Activated B cell treated with CpG ODN at 0.5 μM for 24 hours (primary cell): ENCODE measurements at regions of chr19 and their contacts with region 1.

Region 1: GRCh38 chr19:16371540-16371986 is 46.9 kb downstream of the KLF2 start:
- DNase-seq: peak; percentile 77
- ATAC-seq: peak; percentile 78
- H3K4me3 Mint-ChIP-seq: peak overlapping the region; percentile 78
- H3K27ac Mint-ChIP-seq: no peak overlapping the region
- H3K4me1 Mint-ChIP-seq: peaks cover 33% of the 10 kb centered on the region
- H3K27me3 Mint-ChIP-seq: no peaks in the 10 kb centered on the region
- CTCF ChIP-seq: no peak

Region 2: DNA sequence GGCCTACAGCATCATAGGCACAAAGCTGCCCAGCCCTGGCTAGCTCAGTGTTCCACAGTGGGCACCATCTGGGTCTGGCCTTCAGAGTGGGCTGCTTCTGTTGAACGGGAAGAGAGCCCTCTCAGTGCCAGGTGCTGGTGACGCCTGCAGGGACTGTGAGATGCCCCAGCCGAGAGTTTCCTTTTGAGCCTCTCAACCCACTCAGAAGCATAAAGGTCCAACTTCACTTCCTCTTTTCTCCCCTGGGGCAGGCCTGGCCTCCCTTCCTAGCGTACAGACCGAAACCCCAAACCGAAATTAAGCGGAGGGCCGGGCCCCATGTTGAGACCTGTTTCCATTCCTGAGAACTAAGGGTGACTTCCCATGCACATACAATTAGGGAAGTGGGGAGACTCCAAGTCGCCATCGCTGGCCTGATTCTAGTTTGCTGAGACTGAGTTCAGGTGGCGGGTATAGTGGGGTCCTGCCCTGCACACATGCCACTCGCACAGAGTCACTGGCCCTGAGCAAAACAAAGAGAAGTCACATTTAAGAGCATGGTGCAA is 253.0 kb before region 1 on chr19:
- CTCF ChIA-PET with region 1: no interaction called
- POLR2A ChIA-PET with region 1: interaction called, 11 read pairs
- intact Hi-C with region 1: no loop called
- DNase-seq: peak; percentile 76
- ATAC-seq: peak; percentile 87
- H3K4me3 Mint-ChIP-seq: peak overlapping the region; percentile 73
- H3K27ac Mint-ChIP-seq: peak overlapping the region; percentile 98
- H3K4me1 Mint-ChIP-seq: peaks cover 80% of the 10 kb centered on the region
- H3K27me3 Mint-ChIP-seq: no peaks in the 10 kb centered on the region
- CTCF ChIP-seq: no peak

Region 3: DNA sequence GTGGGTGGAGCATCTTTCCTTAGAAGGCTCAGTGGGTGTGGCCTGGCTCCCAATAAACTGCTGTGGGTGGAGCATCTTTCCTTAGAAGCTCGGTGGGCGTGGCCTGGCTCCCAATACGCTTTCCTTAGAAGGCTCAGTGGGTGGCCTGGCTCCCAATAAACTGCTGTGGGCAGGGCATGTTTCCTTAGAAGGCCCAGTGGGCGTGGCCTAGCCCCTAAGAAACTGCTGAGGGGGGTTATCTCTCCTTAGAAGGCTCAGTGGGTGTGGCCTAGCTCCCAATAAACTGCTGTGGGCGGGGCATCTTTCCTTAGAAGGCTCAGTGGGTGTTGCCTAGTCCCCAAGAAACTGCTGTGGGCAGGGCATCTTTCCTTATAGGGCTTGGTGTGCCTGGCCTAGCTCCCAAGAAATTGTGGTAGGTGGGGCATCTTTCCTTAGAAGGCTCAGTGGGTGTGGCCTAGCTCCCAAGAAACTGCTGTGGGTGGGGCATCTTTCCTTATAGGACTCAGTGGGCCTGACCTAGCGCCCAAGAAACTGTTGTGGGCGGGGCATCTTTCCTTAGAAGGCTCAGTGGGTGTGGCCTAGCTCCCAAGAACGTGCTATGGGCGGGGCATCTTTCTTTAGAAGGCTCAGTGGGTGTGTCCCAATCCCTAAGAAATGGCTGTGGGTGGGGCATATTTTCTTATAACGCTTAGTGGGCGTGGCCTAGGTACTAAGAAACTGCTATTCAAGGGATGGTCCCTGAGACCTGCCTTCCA is 217.8 kb before region 1 on chr19:
- CTCF ChIA-PET with region 1: no interaction called
- POLR2A ChIA-PET with region 1: no interaction called
- intact Hi-C with region 1: no loop called
- DNase-seq: no peak
- ATAC-seq: no peak
- H3K4me3 Mint-ChIP-seq: no peak overlapping the region
- H3K27ac Mint-ChIP-seq: peak overlapping the region; percentile 30
- H3K4me1 Mint-ChIP-seq: peaks cover 59% of the 10 kb centered on the region
- H3K27me3 Mint-ChIP-seq: no peaks in the 10 kb centered on the region
- CTCF ChIP-seq: no peak

Region 4: DNA sequence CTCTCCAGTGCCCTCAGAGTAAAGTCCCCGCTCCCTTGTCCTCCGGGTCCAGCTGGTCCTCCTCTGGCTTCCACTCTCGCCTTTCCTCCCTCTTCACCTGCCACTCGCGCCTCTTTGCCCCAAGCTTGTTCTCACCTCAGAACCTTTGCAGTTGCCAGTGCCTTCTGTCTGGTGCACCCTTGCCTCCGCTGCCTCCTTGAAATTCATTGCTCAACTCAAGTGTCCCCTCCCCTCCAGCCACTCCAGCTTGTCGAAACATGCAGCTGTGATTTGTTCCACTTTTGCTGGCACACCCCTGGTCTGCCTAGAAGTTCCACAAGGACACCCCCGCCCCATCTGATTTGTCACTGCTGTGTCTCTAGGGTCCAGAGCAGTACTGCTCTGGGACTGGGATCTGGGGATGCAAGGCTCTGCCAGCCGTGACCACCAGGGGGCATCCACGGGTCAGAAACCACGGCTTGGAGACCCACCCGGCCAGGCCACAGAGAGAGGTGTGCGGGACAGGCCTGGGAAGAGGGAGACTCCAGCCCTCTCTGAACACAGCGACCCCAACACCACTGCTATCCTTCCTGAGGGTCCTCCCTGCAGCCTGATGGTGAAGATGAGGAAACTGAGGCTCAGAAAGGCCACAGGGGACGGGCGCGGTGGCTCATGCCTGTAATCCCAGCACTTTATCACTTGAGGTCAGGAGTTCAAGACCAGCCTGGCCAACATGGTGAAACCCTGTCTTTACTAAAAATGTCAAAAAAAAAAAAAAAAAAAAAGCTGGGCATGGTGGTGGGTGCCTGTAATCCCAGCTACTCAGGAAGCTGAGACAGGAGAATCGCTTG is 124.0 kb before region 1 on chr19:
- CTCF ChIA-PET with region 1: interaction called, 9 read pairs
- POLR2A ChIA-PET with region 1: interaction called, 45 read pairs
- intact Hi-C with region 1: no loop called
- DNase-seq: peak; percentile 85
- ATAC-seq: peak; percentile 88
- H3K4me3 Mint-ChIP-seq: peak overlapping the region; percentile 17
- H3K27ac Mint-ChIP-seq: peak overlapping the region; percentile 32
- H3K4me1 Mint-ChIP-seq: peaks cover 41% of the 10 kb centered on the region
- H3K27me3 Mint-ChIP-seq: no peaks in the 10 kb centered on the region
- CTCF ChIP-seq: peak; percentile 33

Region 5: GRCh38 chr19:16301999-16302694 is 69.4 kb before region 1 on chr19:
- CTCF ChIA-PET with region 1: no interaction called
- POLR2A ChIA-PET with region 1: interaction called, 4 read pairs
- intact Hi-C with region 1: loop called (anchors 1 kb)
- DNase-seq: peak; percentile 43
- ATAC-seq: peak; percentile 81
- H3K4me3 Mint-ChIP-seq: peak overlapping the region; percentile 50
- H3K27ac Mint-ChIP-seq: peak overlapping the region; percentile 88
- H3K4me1 Mint-ChIP-seq: peaks cover 22% of the 10 kb centered on the region
- H3K27me3 Mint-ChIP-seq: no peaks in the 10 kb centered on the region
- CTCF ChIP-seq: no peak

Region 6: DNA sequence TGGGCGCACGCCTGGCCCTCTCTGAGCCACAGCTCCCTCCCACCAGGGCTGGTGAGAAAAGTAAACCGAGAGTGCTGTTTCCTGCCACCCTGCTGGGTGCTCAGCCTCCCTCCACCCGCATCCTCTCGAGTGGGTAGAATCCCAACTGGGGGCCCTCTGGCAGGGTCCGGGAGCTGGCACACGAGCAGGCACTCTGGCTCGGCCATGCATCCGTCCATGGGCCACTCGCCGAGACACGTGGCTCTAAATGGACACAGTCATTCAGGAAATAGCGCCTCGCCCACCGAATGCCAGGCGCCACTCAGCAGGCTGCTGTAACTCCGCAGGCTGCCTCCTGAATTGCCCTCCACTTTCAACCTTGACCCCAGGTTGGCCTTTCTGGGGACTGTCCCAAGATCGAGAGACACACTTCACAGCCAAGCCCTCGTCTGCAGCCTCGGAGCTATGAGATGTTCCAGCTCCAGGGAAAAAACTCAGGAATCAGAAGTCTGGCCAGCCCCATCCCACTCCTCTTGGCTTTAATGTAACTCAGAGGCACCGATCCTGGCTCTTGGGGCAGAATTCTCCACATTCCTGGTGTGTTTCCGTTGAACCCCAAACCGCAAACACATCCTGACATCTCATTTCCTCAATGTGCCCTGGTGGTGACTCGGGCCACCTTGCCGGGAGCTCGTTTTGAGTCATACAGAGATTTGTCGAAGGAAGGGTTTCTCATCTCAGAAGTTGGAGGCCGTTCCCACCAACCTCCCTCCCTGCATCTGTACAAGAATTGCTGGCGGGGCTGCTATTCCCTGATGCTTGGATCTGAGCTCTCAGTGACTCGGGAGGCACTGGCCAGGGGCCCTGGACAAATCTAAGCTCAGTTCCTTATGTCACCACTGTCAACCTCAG is 32.8 kb before region 1 on chr19:
- CTCF ChIA-PET with region 1: interaction called, 10 read pairs
- POLR2A ChIA-PET with region 1: interaction called, 828 read pairs
- intact Hi-C with region 1: loop called (anchors 1 kb)
- DNase-seq: no peak
- ATAC-seq: peak; percentile 19
- H3K4me3 Mint-ChIP-seq: peak overlapping the region; percentile 76
- H3K27ac Mint-ChIP-seq: peak overlapping the region; percentile 75
- H3K4me1 Mint-ChIP-seq: peaks cover 64% of the 10 kb centered on the region
- H3K27me3 Mint-ChIP-seq: no peaks in the 10 kb centered on the region
- CTCF ChIP-seq: no peak

Region 7: GRCh38 chr19:16382775-16383543 is 11.4 kb after region 1 on chr19:
- CTCF ChIA-PET with region 1: interaction called, 28 read pairs
- POLR2A ChIA-PET with region 1: interaction called, 194 read pairs
- intact Hi-C with region 1: loop called (anchors 1 kb)
- DNase-seq: peak; percentile 63
- ATAC-seq: peak; percentile 59
- H3K4me3 Mint-ChIP-seq: peak overlapping the region; percentile 57
- H3K27ac Mint-ChIP-seq: peak overlapping the region; percentile 94
- H3K4me1 Mint-ChIP-seq: peaks cover 82% of the 10 kb centered on the region
- H3K27me3 Mint-ChIP-seq: no peaks in the 10 kb centered on the region
- CTCF ChIP-seq: no peak

Region 8: DNA sequence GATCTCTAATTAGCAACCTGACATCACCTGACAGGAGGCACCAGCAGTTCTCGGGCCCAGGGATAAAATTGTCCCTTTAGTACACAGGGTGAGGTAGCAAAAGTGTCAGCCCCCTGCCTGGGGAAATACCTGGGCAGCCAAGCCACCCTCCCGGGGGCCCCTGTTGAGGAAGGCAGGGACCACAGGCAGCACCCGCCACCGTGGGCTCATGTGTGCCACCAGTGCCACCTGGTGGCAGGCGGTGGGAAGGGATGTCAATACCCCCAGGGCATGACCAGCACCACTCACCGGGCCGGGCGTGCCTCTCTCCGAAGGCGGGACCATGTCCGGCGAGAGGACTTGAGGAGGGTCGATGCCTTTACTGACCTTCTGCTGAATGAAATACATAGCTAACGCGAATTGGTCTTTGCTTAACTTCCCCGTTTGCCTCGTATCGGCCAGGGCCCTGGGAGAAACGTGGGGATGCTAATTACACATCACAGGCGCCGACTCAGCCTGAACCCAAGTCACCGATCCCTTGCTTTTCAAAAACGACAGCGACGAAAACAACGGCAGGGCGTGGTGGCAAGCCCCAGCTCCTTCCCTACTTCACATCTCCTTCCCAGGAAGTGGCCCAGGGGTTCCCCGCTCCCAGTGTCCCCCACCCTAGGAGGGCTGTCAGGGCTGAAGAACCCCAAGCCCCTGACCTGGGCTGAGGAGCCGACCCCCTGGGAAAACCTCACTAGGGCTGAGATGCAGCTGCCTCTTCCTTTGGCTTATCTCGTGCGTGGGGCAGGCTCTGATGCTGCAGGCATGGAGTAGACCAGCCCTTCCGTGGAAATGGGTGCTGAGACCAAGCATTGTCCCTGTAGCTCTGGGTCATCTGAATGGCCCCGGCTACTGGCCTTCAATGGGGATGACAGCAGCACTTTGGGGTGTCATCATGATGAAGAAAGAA is 46.4 kb after region 1 on chr19:
- CTCF ChIA-PET with region 1: interaction called, 9 read pairs
- POLR2A ChIA-PET with region 1: interaction called, 22 read pairs
- intact Hi-C with region 1: no loop called
- DNase-seq: peak; percentile 80
- ATAC-seq: peak; percentile 92
- H3K4me3 Mint-ChIP-seq: peak overlapping the region; percentile 61
- H3K27ac Mint-ChIP-seq: peak overlapping the region; percentile 83
- H3K4me1 Mint-ChIP-seq: peaks cover 37% of the 10 kb centered on the region
- H3K27me3 Mint-ChIP-seq: no peaks in the 10 kb centered on the region
- CTCF ChIP-seq: peak; percentile 87

Region 9: DNA sequence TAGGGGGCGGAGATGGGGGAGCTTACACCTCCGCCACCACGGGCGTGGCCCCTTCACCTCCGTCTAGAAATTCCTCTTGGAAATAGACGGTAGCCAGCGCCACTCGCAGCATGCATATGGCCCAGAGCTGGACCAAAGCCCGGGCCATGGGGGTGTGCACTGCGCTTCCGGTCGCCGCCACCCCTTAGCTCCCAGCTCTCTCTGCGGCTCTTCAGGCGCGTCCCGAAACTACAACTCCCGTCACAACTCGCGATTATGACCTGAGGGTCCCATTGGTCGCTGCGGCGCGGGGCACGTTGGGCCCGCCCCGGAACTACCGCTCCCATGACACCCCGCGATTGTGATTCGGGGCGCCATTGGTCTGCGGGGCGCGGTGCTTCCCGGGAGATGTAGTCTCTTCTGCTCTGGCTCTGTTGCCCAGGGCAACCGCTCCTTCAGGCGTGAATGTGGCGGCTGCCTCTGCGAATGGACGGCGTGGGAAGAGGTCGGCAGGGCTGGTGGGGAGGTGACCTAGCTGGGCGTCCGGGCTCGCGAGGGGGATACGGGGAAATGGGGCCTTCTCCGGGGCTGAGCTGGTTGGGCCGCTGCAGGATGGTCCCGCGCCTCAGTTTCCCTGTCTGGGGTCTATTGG is 124.5 kb after region 1 on chr19 and contains the starts of genes C19orf44 and CALR3:
- CTCF ChIA-PET with region 1: no interaction called
- POLR2A ChIA-PET with region 1: no interaction called
- intact Hi-C with region 1: no loop called
- DNase-seq: peak; percentile 94
- ATAC-seq: peak; percentile 97
- H3K4me3 Mint-ChIP-seq: peak within 1 kb of the TSS; percentile 98
- H3K27ac Mint-ChIP-seq: peak within 1 kb of the TSS; percentile 88
- H3K4me1 Mint-ChIP-seq: peaks cover 19% of the 10 kb centered on the region
- H3K27me3 Mint-ChIP-seq: no peaks in the 10 kb centered on the region
- CTCF ChIP-seq: no peak
- total RNA-seq, gene C19orf44: 5.9 and 7.1 TPM in 2 replicates
- total RNA-seq, gene CALR3: not detected in 2 replicates